B cell (primary cell): ENCODE measurements at regions of chr3 and their contacts with region 1.

Region 1: GRCh38 chr3:4284865-4285264 is 18.3 kb upstream of the SETMAR start:
- DNase-seq: no peak
- ATAC-seq: no peak
- H3K4me3 ChIP-seq: no peak overlapping the region
- H3K4me3 Mint-ChIP-seq: no peak overlapping the region
- H3K27ac ChIP-seq: no peak overlapping the region
- H3K27ac Mint-ChIP-seq: no peak overlapping the region
- H3K4me1 ChIP-seq: no peaks in the 10 kb centered on the region
- H3K4me1 Mint-ChIP-seq: no peaks in the 10 kb centered on the region
- H3K27me3 ChIP-seq: no peaks in the 10 kb centered on the region
- H3K27me3 Mint-ChIP-seq: peaks cover 6% of the 10 kb centered on the region
- CTCF ChIP-seq: no peak

Region 2: DNA sequence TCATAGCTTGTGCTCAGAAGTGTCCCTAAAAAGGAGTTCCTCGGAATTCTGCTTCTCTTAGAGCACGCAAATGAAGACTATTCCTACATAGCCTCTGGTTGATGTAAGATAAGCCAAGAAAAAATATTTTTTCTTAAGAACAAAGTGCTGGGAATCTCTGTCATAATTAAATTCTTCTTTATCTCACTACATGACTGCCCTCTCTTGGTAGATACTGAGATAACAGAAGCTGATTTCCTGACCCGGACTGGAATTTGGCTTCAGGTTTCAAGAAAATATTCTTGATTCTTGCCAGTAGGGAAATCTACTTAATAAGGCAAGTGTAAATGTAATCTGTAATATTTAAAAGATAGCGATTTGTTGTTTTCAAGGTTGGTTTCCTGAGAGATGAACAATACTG is 13.0 kb before region 1 on chr3:
- CTCF ChIA-PET with region 1: interaction called, 22 read pairs
- POLR2A ChIA-PET with region 1: no interaction called
- intact Hi-C with region 1: no loop called
- DNase-seq: peak; percentile 58
- ATAC-seq: no peak
- H3K4me3 ChIP-seq: no peak overlapping the region
- H3K4me3 Mint-ChIP-seq: peak overlapping the region; percentile 21
- H3K27ac ChIP-seq: no peak overlapping the region
- H3K27ac Mint-ChIP-seq: no peak overlapping the region
- H3K4me1 ChIP-seq: peaks cover 14 to 20% of the 10 kb centered on the region in 2 donors
- H3K4me1 Mint-ChIP-seq: peaks cover 25% of the 10 kb centered on the region
- H3K27me3 ChIP-seq: no peaks in the 10 kb centered on the region
- H3K27me3 Mint-ChIP-seq: no peaks in the 10 kb centered on the region
- CTCF ChIP-seq: peak; percentile 83

Region 3: GRCh38 chr3:4314688-4315087 is 29.8 kb after region 1 on chr3:
- CTCF ChIA-PET with region 1: no interaction called
- POLR2A ChIA-PET with region 1: no interaction called
- intact Hi-C with region 1: no loop called
- DNase-seq: no peak
- ATAC-seq: no peak
- H3K4me3 ChIP-seq: no peak overlapping the region
- H3K4me3 Mint-ChIP-seq: no peak overlapping the region
- H3K27ac ChIP-seq: no peak overlapping the region
- H3K27ac Mint-ChIP-seq: no peak overlapping the region
- H3K4me1 ChIP-seq: no peaks in the 10 kb centered on the region
- H3K4me1 Mint-ChIP-seq: no peaks in the 10 kb centered on the region
- H3K27me3 ChIP-seq: no peaks in the 10 kb centered on the region
- H3K27me3 Mint-ChIP-seq: no peaks in the 10 kb centered on the region
- CTCF ChIP-seq: peak; percentile 8